ENCODE measurements at regions of chr2 and their contacts with region 1.

Region 1: DNA sequence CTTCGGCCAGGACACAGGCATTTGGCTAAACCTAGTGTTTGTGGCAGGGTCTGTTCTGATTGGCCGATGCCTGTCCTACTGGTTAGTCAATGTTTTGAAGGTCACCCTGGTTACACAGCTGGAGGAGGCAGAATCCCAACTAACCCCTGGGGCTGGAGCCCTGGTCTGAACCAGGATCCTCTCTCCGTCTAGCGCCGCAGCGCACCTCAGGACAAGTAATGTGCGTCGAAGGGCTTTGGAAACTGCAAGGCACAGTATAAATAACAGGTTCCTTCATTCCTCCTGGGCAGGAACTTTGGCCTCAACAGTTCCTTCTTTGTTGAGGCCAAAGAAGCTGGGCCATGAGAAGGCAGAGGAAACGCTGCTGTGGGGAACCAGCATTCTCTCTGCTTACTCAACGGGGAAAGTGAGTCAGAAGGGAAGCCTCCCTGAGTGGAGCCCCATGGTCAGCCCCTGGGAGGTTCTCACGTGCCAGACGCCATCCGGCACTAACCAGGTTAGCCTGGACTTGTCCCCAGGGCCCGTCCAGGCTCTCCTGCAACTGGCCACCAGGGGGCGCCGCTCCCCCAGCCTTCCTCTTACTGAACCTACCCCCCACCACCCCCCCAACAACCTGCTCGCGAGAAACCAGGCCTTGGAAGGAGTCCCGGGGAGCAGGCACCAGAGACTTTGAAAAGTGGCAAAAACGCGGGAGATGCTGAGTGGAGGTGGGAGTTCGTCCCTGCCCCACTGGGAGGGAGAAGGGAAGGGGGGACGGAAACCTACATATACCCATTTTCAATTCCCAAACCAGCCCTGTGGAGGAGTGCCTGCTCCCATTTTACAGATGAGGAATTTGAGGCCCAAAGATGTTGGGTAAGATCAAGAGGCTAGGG is 19.8 kb downstream of the TEX44 start:
- DNase-seq: peak; percentile 87 to 92 (median 88)
- ATAC-seq: peak; percentile 94
- H3K4me3 ChIP-seq: no peak overlapping the region
- H3K27ac ChIP-seq: peak overlapping the region; percentile 46; the same call in 1 of the 3 replicates
- H3K4me1 ChIP-seq: peaks cover 17 to 36% of the 10 kb centered on the region in 2 experiments; a peak in 4 of 5 replicates
- H3K27me3 ChIP-seq: peaks cover 0 to 4% of the 10 kb centered on the region in 2 experiments; a peak in 1 of 5 replicates
- CTCF ChIP-seq: peak; percentile 77 to 86 (median 82)
- EP300 ChIP-seq: no peak
- POLR2A ChIP-seq: no peak
- RAD21 ChIP-seq: peak; percentile 82 to 83

Region 2: GRCh38 chr2:231280846-231281245 is 331.6 kb before region 1 on chr2:
- CTCF ChIA-PET with region 1: no interaction called
- POLR2A ChIA-PET with region 1: no interaction called
- in situ Hi-C with region 1: no loop called
- intact Hi-C with region 1: no loop called
- DNase-seq: peak in 2 of 4 experiments; percentile 8 to 17
- ATAC-seq: peak; percentile 47; the same call in 2 of the 3 replicates
- H3K4me3 ChIP-seq: no peak overlapping the region
- H3K27ac ChIP-seq: no peak overlapping the region
- H3K4me1 ChIP-seq: no peaks in the 10 kb centered on the region; a peak in 2 of 5 replicates
- H3K27me3 ChIP-seq: peaks cover 10 to 12% of the 10 kb centered on the region in 2 experiments; a peak in 4 of 5 replicates
- CTCF ChIP-seq: no peak
- EP300 ChIP-seq: no peak
- POLR2A ChIP-seq: no peak
- RAD21 ChIP-seq: no peak

Region 3: DNA sequence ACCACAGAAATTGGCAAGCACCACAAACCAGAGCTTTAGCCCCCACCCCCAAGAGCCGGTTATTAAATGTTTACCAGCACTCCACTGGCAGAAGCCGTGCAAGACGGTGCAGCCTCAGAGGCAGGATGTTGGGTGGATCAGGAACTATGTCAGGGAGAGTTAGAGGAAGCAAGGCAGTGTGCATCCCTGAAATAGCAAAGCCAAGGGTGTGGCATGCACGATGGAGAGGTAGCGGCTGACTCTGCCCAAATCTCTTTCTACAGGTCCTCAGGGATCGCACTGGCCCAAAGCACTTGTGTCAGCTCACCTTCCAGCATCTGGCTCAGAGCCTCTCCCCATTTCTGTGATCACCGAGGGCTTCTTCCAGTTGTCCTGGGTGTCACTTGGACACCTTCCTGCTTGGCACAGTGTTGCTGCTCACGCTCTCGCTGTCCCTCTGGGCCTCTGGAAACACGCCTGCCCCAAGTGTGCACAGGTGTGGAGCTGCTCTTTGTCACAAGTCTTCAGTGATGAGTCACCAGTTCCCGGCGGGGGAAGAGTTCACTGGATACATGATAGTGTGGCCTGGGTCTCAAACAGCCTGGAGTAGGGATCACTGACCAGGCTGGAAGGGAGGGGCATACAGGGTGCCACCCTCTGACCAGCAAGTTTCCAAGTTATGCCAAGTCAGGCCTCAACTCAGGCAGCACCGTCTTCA is 234.2 kb before region 1 on chr2:
- CTCF ChIA-PET with region 1: no interaction called
- POLR2A ChIA-PET with region 1: no interaction called
- in situ Hi-C with region 1: no loop called
- intact Hi-C with region 1: no loop called
- DNase-seq: no peak
- ATAC-seq: no peak
- H3K4me3 ChIP-seq: no peak overlapping the region
- H3K27ac ChIP-seq: no peak overlapping the region
- H3K4me1 ChIP-seq: peaks cover 6 to 14% of the 10 kb centered on the region in 2 experiments; a peak in 4 of 5 replicates
- H3K27me3 ChIP-seq: peaks cover 0 to 31% of the 10 kb centered on the region in 2 experiments; a peak in 2 of 5 replicates
- CTCF ChIP-seq: no peak
- EP300 ChIP-seq: no peak
- POLR2A ChIP-seq: no peak
- RAD21 ChIP-seq: no peak

Region 4: DNA sequence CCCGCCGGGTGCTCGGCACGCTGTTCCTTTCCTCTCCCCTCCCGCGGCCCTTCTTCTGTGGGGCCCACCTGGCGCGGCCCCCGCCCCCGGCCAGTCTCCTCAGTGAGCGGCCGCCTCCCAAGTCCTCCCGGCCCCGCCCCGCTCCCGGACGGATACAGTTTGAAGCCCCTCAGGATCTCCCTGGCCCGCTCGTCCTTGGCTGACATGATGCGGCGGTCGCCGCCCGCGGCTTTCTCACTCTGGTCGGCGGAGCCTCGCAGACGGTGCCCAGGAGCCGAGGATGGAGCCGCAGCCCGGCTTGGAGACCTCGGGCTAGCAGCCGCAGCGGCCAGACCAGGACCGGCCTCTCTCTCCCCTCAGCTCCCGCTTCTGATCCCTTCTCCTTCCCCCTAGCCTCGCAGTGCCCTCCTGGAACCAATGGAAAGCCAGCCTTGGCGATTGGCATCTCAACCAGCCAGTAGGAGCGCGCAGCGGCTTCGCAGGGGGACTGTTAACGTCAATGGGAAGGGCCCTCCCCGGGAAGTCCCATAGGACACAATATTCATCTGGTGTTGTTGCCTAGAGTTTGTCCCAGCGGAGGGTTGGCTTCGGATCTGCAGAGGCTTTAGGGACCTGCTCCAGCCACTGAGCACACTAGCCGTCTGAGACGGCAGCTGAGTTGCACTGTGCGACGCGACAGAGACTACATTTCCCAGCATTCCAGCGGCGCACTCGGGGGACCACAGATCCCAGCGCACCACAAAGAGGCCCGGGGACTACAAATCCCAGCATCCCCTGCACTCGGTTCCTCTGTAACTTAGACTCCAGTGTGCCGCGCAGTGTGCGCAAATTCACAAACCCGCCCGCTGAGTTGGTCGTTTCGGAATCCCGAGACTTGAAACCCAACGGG is 168.7 kb after region 1 on chr2 and contains the start of gene PDE6D:
- CTCF ChIA-PET with region 1: no interaction called
- POLR2A ChIA-PET with region 1: no interaction called
- in situ Hi-C with region 1: no loop called
- intact Hi-C with region 1: loop called (anchors 5 kb)
- DNase-seq: peak; percentile 95 to 99 (median 97)
- ATAC-seq: peak; percentile 98
- H3K4me3 ChIP-seq: peak within 1 kb of the TSS; percentile 66
- H3K27ac ChIP-seq: peak within 1 kb of the TSS; percentile 67
- H3K4me1 ChIP-seq: peaks cover 10 to 20% of the 10 kb centered on the region in 2 experiments; a peak in 4 of 5 replicates
- H3K27me3 ChIP-seq: no peaks in the 10 kb centered on the region
- CTCF ChIP-seq: no peak
- EP300 ChIP-seq: peak; percentile 3; the same call in 1 of the 2 replicates
- POLR2A ChIP-seq: peak; percentile 61; the same call in 1 of the 2 replicates
- RAD21 ChIP-seq: no peak
- polyA plus RNA-seq, gene PDE6D: 0.65 to 1.5 TPM

Measured in K562 (cell line).